Activated T-helper 1 cell treated with anti-CD3 and anti-CD28 coated beads, Interleukin-12 subunit alpha, Interleukin-12 subunit beta, Interleukin-2, Interleukin-4 antibody, amounts not matched to agents 30 ng/mL and 10 ng/mL and 1 ng/mL, durations not matched to agents 14 hours and 24 hours and 36 hours (primary cell): ENCODE measurements at regions of chr2 and their contacts with region 1.

Region 1: DNA sequence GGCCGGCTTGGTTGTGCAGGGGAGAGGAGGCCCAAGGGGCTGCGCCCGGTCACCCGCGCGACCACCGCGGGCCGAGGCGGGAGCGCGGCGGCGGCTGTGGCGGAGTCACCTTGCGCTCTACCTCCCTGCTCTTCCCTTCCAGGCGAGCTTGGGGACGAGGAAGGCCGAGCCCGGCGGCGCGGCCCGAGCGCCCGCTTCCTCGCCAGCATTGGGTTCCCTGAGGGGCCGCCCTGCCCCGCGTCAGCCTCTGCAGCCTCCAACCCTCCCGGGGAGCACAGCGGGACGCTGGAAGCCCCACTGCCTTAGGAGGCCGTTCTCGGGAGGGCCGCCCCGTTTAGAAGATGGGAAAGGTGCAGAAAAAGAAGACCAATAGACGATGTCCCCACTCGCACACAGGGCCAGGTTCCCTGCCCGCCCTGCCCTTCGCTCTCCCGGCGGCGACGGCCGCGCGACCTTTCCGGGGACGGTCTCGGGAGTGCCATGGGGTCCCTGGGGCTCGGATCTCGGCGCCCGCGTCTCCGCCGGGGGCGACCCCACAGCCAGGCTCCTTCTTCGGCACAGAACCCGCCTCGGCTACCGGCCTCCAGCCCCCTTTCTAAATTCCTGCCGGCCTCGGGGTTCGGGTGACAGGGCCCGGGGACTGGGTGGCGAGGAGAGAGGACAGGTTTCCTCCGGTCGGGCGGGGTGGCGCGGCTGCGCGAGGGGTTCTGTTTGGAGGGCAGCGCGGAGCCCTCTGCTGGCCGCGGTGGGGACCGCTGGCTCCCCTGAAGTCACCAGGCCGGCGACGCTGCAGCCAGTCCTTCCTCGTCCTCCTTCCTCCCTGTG is 85.5 kb downstream of the HS6ST1 start:
- DNase-seq: peak; percentile 78
- H3K4me3 Mint-ChIP-seq: peak overlapping the region; percentile 82
- H3K27ac Mint-ChIP-seq: peak overlapping the region; percentile 52
- H3K4me1 Mint-ChIP-seq: peaks cover 5% of the 10 kb centered on the region
- H3K27me3 Mint-ChIP-seq: peaks cover 15% of the 10 kb centered on the region

Region 2: GRCh38 chr2:126704434-126705160 is 1528.6 kb before region 1 on chr2:
- intact Hi-C with region 1: no loop called
- DNase-seq: no peak
- H3K4me3 Mint-ChIP-seq: no peak overlapping the region
- H3K27ac Mint-ChIP-seq: no peak overlapping the region
- H3K4me1 Mint-ChIP-seq: peaks cover 7% of the 10 kb centered on the region
- H3K27me3 Mint-ChIP-seq: no peaks in the 10 kb centered on the region

Region 3: DNA sequence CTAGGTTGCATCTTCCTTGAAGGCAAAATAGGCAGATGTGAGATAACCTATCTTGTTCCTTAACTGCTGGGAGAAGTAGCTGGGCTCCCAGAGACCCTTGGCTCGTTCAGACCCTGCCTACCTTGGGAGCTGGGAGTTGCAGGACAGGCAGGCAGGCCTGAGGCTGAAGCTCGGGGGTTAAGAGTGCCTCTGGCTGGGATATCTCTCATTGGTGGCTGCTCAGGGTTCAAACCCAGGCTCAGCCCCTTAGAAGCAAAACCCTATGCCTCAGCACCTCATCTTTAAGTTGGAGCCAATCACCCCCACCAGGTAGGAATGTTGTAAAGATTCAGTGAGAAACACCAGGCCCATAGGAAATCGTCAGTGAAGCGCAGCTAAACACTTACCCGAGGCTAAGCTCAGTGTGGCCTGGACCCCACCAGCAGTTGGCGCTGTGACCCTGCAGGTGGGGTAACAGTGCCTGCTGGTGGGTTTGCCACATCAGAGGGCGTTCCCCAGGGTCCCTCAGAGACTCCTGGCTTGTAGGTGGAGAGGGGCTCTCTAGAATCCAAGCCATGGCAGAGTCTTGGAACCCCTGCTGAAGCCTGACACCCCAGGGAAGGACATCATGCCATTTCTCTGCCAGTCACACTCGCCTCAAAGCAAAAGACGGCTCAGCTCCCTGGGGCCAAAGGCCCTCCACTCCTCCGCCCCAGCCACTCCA is 641.8 kb before region 1 on chr2:
- intact Hi-C with region 1: no loop called
- DNase-seq: peak; percentile 37
- H3K4me3 Mint-ChIP-seq: no peak overlapping the region
- H3K27ac Mint-ChIP-seq: no peak overlapping the region
- H3K4me1 Mint-ChIP-seq: no peaks in the 10 kb centered on the region
- H3K27me3 Mint-ChIP-seq: peaks cover 4% of the 10 kb centered on the region

Region 4: GRCh38 chr2:127884436-127885345 is 348.5 kb before region 1 on chr2:
- intact Hi-C with region 1: loop called (anchors 10 kb)
- DNase-seq: no peak
- H3K4me3 Mint-ChIP-seq: peak overlapping the region; percentile 98
- H3K27ac Mint-ChIP-seq: peak overlapping the region; percentile 95
- H3K4me1 Mint-ChIP-seq: peaks cover 45% of the 10 kb centered on the region
- H3K27me3 Mint-ChIP-seq: no peaks in the 10 kb centered on the region

Region 5: GRCh38 chr2:127986548-127987079 is 246.6 kb before region 1 on chr2:
- intact Hi-C with region 1: no loop called
- DNase-seq: no peak
- H3K4me3 Mint-ChIP-seq: no peak overlapping the region
- H3K27ac Mint-ChIP-seq: no peak overlapping the region
- H3K4me1 Mint-ChIP-seq: peaks cover 12% of the 10 kb centered on the region
- H3K27me3 Mint-ChIP-seq: no peaks in the 10 kb centered on the region

Region 6: GRCh38 chr2:128178650-128179460 is 54.3 kb before region 1 on chr2:
- intact Hi-C with region 1: loop called (anchors 1 kb)
- DNase-seq: peak; percentile 19
- H3K4me3 Mint-ChIP-seq: no peak overlapping the region
- H3K27ac Mint-ChIP-seq: peak overlapping the region; percentile 37
- H3K4me1 Mint-ChIP-seq: peaks cover 9% of the 10 kb centered on the region
- H3K27me3 Mint-ChIP-seq: no peaks in the 10 kb centered on the region

Region 7: DNA sequence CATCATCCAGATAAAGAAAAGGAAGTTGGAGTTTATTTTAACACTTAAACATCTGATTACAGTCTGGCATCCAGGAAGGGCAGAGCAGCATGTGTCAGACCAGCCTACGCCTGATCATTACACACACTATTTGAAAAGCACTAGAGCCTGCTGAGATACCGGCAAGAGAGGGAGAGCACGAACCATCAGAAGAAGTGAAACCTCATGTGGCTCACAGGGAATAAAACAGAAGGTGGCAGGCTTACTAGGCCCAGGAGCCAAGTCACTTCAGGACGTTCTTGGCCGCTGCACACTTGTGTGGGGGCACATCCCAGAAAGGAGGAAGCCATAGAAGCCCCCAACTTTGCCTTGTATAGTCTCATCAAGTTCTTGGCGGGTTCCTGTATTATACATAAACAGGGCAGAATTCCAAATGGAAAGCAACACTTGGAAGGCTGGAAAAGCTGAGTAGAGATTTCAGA is 36.7 kb before region 1 on chr2:
- intact Hi-C with region 1: loop called (anchors 1 kb)
- DNase-seq: no peak
- H3K4me3 Mint-ChIP-seq: no peak overlapping the region
- H3K27ac Mint-ChIP-seq: no peak overlapping the region
- H3K4me1 Mint-ChIP-seq: peaks cover 30% of the 10 kb centered on the region
- H3K27me3 Mint-ChIP-seq: no peaks in the 10 kb centered on the region